ENCODE measurements at regions of chr10 and their contacts with region 1.

Region 1: DNA sequence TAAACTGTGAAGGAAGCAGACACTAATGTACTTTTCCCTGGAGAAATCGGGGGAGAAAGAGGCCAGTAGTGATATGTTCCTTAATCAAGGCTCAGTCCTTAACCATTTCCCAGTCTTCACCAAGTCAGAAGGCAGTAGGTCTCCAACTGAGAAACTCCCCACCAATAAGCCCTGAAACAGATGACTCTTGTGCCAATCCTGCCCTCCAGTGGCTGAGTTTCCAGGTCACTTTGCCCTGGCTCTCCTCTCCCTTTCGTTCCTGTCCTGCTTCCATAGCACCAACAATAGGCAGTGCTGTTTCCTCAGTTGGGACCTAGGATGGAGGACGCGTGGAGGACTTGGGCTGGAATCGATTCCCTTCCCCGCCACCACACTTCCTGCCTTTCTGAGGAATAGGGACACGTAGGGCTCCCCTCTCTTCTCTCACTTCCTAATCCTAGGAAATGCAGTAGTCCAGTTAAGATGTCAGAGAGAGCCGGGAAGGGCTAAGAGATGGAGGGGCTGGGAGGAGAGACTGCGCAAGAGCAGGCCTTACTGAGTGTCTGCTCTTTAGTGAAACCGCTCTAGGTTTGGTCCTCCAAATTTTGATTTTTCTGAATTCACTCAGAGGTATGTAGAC is 23.4 kb downstream of the ATOH7 start:
- DNase-seq: peak; percentile 79 to 87
- H3K4me3 ChIP-seq: no peak overlapping the region
- H3K27ac ChIP-seq: no peak overlapping the region
- H3K4me1 ChIP-seq: no peaks in the 10 kb centered on the region; a peak in 2 of 7 replicates
- H3K27me3 ChIP-seq: no peaks in the 10 kb centered on the region
- CTCF ChIP-seq: peak; percentile 79 to 93 (median 86)
- EP300 ChIP-seq: no peak
- POLR2A ChIP-seq: no peak
- RAD21 ChIP-seq: peak; percentile 99

Region 2: GRCh38 chr10:68156373-68157185 is 52.0 kb before region 1 on chr10:
- CTCF ChIA-PET with region 1: interaction called, 23 read pairs
- POLR2A ChIA-PET with region 1: no interaction called
- DNase-seq: no peak
- H3K4me3 ChIP-seq: no peak overlapping the region
- H3K27ac ChIP-seq: no peak overlapping the region
- H3K4me1 ChIP-seq: peaks cover 0 to 12% (median 9%) of the 10 kb centered on the region in 4 experiments; a peak in 5 of 7 replicates
- H3K27me3 ChIP-seq: no peaks in the 10 kb centered on the region
- CTCF ChIP-seq: peak in 2 of 3 experiments; percentile 57 to 77; a peak in 3 of 4 replicates
- EP300 ChIP-seq: no peak
- POLR2A ChIP-seq: no peak
- RAD21 ChIP-seq: peak; percentile 80 to 83

Region 3: GRCh38 chr10:68196701-68197100 is 11.8 kb before region 1 on chr10:
- CTCF ChIA-PET with region 1: interaction called, 14 read pairs
- POLR2A ChIA-PET with region 1: no interaction called
- DNase-seq: no peak
- H3K4me3 ChIP-seq: no peak overlapping the region
- H3K27ac ChIP-seq: no peak overlapping the region
- H3K4me1 ChIP-seq: no peaks in the 10 kb centered on the region
- H3K27me3 ChIP-seq: no peaks in the 10 kb centered on the region
- CTCF ChIP-seq: no peak
- EP300 ChIP-seq: no peak
- POLR2A ChIP-seq: no peak
- RAD21 ChIP-seq: no peak

Region 4: DNA sequence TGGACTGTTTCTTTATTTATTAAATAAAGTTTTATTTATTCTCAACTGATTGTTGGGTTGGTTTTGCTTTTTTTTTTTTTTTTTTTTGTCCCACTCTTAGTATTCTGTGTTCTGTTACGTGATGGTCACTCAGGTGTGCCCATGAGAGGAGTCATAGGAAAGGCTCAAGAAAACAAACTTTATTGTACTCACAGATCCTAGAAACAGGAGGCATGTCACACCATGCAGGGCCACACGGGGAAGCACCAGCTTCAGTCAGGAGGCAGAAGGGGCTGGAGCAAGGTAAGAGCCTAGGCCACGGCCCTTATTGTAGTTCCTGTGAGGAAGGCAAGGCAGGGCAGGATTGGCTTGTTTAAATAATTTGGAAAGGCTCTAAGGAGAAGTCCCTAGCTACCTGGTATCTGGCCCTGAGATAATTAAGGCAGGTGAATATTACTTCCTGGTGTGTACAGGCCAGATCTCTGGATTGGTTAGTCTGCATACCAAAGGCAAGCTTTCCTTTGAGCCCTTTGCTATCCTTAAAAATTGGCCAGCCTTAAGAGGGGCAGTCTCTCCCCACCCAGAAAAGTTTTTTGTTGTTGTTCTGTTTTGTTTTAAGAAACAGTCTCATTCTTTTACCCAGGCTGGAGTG is 15.1 kb after region 1 on chr10:
- CTCF ChIA-PET with region 1: interaction called, 19 read pairs
- POLR2A ChIA-PET with region 1: no interaction called
- DNase-seq: peak in 1 of 2 experiments; percentile 58
- H3K4me3 ChIP-seq: no peak overlapping the region
- H3K27ac ChIP-seq: no peak overlapping the region
- H3K4me1 ChIP-seq: no peaks in the 10 kb centered on the region
- H3K27me3 ChIP-seq: no peaks in the 10 kb centered on the region
- CTCF ChIP-seq: peak; percentile 58 to 77 (median 67)
- EP300 ChIP-seq: no peak
- POLR2A ChIP-seq: no peak
- RAD21 ChIP-seq: peak; percentile 67 to 77

Region 5: GRCh38 chr10:68251625-68252495 is 43.3 kb after region 1 on chr10:
- CTCF ChIA-PET with region 1: interaction called, 17 read pairs
- POLR2A ChIA-PET with region 1: no interaction called
- DNase-seq: no peak
- H3K4me3 ChIP-seq: no peak overlapping the region
- H3K27ac ChIP-seq: no peak overlapping the region
- H3K4me1 ChIP-seq: peaks cover 0 to 11% (median 6%) of the 10 kb centered on the region in 4 experiments; a peak in 3 of 7 replicates
- H3K27me3 ChIP-seq: no peaks in the 10 kb centered on the region
- CTCF ChIP-seq: no peak
- EP300 ChIP-seq: no peak
- POLR2A ChIP-seq: no peak
- RAD21 ChIP-seq: no peak

Region 6: DNA sequence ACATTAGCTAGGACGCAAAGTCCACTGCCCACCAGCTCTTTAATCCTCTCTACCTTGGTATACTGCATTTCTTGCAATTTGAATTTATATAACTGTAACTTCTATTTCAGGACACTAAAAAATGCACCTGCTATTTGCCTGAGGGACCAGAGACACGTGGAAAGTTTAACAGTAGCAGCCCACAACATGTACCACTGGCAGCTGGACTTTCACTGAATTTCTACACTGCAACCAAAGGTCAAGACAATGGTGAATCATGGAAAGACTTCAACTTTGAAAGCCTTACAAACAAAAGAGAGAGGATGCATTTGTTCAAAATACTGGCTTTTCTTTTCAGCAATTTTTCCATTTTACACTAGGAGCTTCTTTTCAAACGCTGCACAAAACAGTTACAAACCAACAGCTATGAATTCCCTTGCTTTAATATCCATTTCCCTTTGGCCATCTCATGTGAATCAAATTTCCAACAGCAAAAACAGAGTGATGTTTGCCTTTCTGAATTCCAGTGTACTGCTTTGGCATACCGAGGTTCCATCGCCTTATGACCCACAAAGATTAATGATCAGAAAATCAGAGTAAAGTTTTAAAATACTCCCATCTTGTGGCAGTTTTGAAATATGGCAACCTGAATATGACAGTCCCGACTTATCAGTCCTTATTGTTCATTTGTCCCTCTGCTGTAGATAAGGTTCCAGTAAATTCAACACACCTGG is 93.4 kb after region 1 on chr10:
- CTCF ChIA-PET with region 1: interaction called, 71 read pairs
- POLR2A ChIA-PET with region 1: no interaction called
- DNase-seq: no peak
- H3K4me3 ChIP-seq: no peak overlapping the region
- H3K27ac ChIP-seq: no peak overlapping the region
- H3K4me1 ChIP-seq: peaks cover 0 to 3% (median 0%) of the 10 kb centered on the region in 4 experiments; a peak in 1 of 7 replicates
- H3K27me3 ChIP-seq: no peaks in the 10 kb centered on the region
- CTCF ChIP-seq: peak in 2 of 3 experiments; percentile 37 to 48; a peak in 2 of 4 replicates
- EP300 ChIP-seq: no peak
- POLR2A ChIP-seq: no peak
- RAD21 ChIP-seq: peak; percentile 64 to 67

Region 7: DNA sequence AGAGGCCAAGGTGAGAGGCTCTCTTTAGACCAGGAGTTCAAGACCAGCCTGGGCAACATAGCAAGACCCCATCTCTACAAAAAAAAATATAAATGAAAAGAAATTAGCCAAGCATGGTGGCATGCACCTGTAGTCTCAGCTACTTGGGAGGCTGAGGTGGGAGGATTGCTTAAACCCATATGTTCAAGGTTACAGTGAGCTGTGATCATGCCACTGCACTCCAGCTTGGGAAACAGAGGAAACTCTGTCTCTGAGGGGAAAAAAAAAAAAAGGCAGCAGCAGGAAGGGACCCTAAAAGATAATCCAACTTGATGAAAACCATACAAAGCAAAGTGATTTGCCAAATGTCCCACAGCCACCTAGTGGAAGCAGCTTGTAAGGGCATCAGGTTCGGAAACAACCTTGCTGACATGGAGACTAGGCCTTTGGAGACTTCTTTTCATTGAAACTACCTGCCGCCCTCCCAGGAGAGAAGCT is 139.8 kb after region 1 on chr10:
- CTCF ChIA-PET with region 1: interaction called, 16 read pairs
- POLR2A ChIA-PET with region 1: no interaction called
- DNase-seq: no peak
- H3K4me3 ChIP-seq: no peak overlapping the region
- H3K27ac ChIP-seq: no peak overlapping the region
- H3K4me1 ChIP-seq: peaks cover 0 to 2% (median 0%) of the 10 kb centered on the region in 4 experiments; a peak in 1 of 7 replicates
- H3K27me3 ChIP-seq: no peaks in the 10 kb centered on the region
- CTCF ChIP-seq: peak; percentile 59 to 92 (median 73)
- EP300 ChIP-seq: no peak
- POLR2A ChIP-seq: no peak
- RAD21 ChIP-seq: peak; percentile 57 to 74

Region 8: DNA sequence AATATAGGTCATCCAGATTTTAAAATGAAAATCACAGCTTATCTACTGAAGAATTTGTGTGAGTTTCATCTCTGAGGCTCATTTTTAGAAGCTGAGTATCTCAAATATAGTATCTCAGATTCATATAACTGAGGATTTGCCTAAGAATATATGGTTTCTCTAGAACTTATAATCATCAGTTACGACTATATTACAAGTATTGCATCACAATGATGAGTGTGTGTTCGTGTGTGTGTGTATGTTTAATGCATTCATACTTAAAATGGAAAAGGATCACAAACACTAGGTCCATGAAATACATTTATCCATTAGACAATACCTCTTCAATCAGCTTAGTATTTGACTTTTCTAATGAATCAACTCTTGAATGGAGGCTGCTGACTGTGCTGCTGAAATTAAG is 177.2 kb after region 1 on chr10:
- CTCF ChIA-PET with region 1: no interaction called
- POLR2A ChIA-PET with region 1: no interaction called
- DNase-seq: no peak
- H3K4me3 ChIP-seq: no peak overlapping the region
- H3K27ac ChIP-seq: no peak overlapping the region
- H3K4me1 ChIP-seq: no peaks in the 10 kb centered on the region
- H3K27me3 ChIP-seq: no peaks in the 10 kb centered on the region
- CTCF ChIP-seq: no peak
- EP300 ChIP-seq: no peak
- POLR2A ChIP-seq: no peak
- RAD21 ChIP-seq: no peak